A549 (cell line): ENCODE measurements at regions of chr16 and their contacts with region 1.

Region 1: GRCh38 chr16:27972500-27972899 is 91.0 kb downstream of the GSG1L start:
- DNase-seq: peak; percentile 72
- ATAC-seq: peak; percentile 75 to 87
- H3K4me3 ChIP-seq: peak overlapping the region; percentile 25; the same call in 1 of the 3 replicates
- H3K27ac ChIP-seq: no peak overlapping the region
- H3K4me1 ChIP-seq: 0 out of 3 replicates have a peak, but pooled peaks cover 3% of the 10 kb centered on the region
- CTCF ChIP-seq: peak; percentile 68
- EP300 ChIP-seq: no peak
- POLR2A ChIP-seq: no peak
- RAD21 ChIP-seq: peak; percentile 61 to 76; a peak in 4 of 5 replicates

Region 2: GRCh38 chr16:27951489-27952120 is 20.9 kb before region 1 on chr16:
- CTCF ChIA-PET with region 1: interaction called, 11 read pairs
- POLR2A ChIA-PET with region 1: no interaction called
- DNase-seq: no peak
- ATAC-seq: 0 out of 6 replicates have a peak, but pooled peaks of 1 of the 2 experiments have one; percentile 43
- H3K4me3 ChIP-seq: no peak overlapping the region
- H3K27ac ChIP-seq: no peak overlapping the region
- H3K4me1 ChIP-seq: no peaks in the 10 kb centered on the region
- CTCF ChIP-seq: no peak
- EP300 ChIP-seq: no peak
- POLR2A ChIP-seq: no peak
- RAD21 ChIP-seq: no peak

Region 3: GRCh38 chr16:28025631-28026030 is 53.1 kb after region 1 on chr16:
- CTCF ChIA-PET with region 1: no interaction called
- POLR2A ChIA-PET with region 1: no interaction called
- DNase-seq: no peak
- ATAC-seq: peak in 1 of 2 experiments; percentile 23; a peak in 1 of 6 replicates
- H3K4me3 ChIP-seq: no peak overlapping the region
- H3K27ac ChIP-seq: no peak overlapping the region
- H3K4me1 ChIP-seq: no peaks in the 10 kb centered on the region
- CTCF ChIP-seq: no peak
- EP300 ChIP-seq: no peak
- POLR2A ChIP-seq: no peak
- RAD21 ChIP-seq: no peak

Region 4: DNA sequence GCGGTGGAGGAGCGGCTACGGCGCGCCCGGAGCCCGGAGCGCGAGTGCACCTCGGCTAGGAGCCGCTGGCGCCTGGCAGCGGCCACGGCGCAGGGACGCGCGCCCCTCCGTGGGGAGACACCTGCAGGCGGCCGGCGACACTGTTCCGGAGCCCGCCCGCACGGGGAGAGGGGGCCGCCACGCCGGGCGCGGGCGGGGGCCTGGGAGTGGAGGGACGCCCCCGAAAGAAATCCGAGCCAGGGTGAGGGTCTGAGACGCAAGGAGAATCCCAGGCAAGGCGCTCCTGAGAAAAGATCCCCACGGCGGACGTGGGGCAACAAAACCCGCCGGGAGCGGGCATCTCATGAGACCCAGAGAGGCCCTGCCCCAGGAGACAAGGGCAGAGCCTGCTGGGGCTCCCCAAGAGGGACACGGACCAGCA is 91.2 kb after region 1 on chr16 and contains the start of gene GSG1L:
- CTCF ChIA-PET with region 1: interaction called, 74 read pairs
- POLR2A ChIA-PET with region 1: no interaction called
- DNase-seq: no peak
- ATAC-seq: peak; percentile 28 to 61; a peak in 4 of 6 replicates
- H3K4me3 ChIP-seq: peak within 1 kb of the TSS; percentile 47
- H3K27ac ChIP-seq: no peak within 1 kb of the TSS; a peak in 1 of 6 replicates
- H3K4me1 ChIP-seq: peaks cover 4% of the 10 kb centered on the region; the same call in 1 of the 3 replicates
- CTCF ChIP-seq: peak; percentile 14; the same call in 2 of the 3 replicates
- EP300 ChIP-seq: no peak
- POLR2A ChIP-seq: no peak
- RAD21 ChIP-seq: no peak
- polyA plus RNA-seq, gene GSG1L: not detected in 2 replicates